Activated CD8-positive, alpha-beta memory T cell treated with anti-CD3 and anti-CD28 coated beads, Interleukin-2, amount 10 ng/mL, durations not matched to agents 7 days and 5 days (primary cell): ENCODE measurements at regions of chr3 and their contacts with region 1.

Region 1: DNA sequence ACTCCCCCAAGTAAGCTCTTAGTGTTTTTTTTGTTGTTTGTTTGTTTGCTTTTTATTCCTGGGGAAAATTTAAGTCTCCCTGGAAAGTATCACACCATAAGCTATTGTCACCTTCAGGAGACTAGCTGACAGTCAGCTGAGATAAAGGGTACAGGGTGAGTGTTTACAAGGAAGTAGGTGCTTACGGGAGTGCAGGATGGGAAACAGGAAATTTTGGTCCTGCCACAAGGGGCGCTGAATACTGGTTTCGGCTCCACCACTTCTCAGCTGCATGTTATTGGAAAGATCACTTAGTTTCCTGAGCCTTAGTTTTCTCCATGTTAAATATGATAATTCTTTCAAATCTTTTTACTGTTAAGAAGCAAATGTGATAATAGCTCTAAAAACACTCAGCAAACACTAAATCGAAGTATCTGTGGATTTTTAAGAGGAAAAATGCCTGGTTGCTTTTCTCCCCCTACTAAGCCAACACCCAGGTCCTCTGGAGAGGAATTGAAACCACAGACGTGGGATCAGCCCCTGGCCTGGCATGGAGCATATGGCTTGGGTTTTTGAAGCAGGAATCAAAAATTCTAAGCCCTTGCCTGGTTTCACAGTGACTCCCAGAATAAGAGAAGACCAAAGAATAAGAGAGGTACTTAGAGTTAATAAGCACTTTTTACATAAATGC is 90.7 kb downstream of the SCN11A start:
- DNase-seq: no peak
- ATAC-seq: no peak
- H3K4me3 Mint-ChIP-seq: no peak overlapping the region
- H3K27ac Mint-ChIP-seq: no peak overlapping the region
- H3K4me1 Mint-ChIP-seq: no peaks in the 10 kb centered on the region
- H3K27me3 Mint-ChIP-seq: peaks cover 3% of the 10 kb centered on the region

Region 2: DNA sequence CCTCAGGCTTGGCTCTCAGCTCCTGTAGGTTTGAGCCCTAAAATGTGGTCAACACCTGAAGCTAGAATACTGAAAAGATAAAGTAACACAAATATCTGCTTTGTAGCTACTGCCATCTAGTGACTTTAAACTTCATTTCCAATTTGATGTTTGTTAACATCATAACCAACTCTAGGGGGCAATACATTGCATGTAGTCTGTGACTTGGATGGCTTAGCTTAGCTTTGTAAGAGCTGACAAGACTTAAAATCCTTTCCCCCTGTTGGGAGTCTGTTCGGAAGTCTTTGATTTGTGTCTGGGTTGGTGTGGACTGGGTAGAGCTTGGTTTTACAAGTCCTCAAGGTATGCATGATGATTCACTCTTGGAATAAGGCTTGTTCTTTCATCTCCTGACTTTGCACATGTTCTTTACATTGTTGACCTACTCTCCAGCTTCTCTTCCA is 38.9 kb after region 1 on chr3:
- CTCF ChIA-PET with region 1: interaction called, 10 read pairs
- DNase-seq: no peak
- ATAC-seq: peak; percentile 65
- H3K4me3 Mint-ChIP-seq: no peak overlapping the region
- H3K27ac Mint-ChIP-seq: no peak overlapping the region
- H3K4me1 Mint-ChIP-seq: no peaks in the 10 kb centered on the region
- H3K27me3 Mint-ChIP-seq: peaks cover 20% of the 10 kb centered on the region